ENCODE measurements at regions of chr11 and their contacts with region 1.

Region 1: GRCh38 chr11:85697747-85698146 is 11.8 kb upstream of the CCDC89 start:
- DNase-seq: no peak
- H3K4me3 Mint-ChIP-seq: no peak overlapping the region
- H3K27ac Mint-ChIP-seq: no peak overlapping the region
- H3K4me1 Mint-ChIP-seq: peaks cover 54% of the 10 kb centered on the region
- H3K27me3 Mint-ChIP-seq: no peaks in the 10 kb centered on the region

Region 2: GRCh38 chr11:85483861-85484260 is 213.9 kb before region 1 on chr11:
- CTCF ChIA-PET with region 1: no interaction called
- POLR2A ChIA-PET with region 1: no interaction called
- DNase-seq: no peak
- H3K4me3 Mint-ChIP-seq: no peak overlapping the region
- H3K27ac Mint-ChIP-seq: no peak overlapping the region
- H3K4me1 Mint-ChIP-seq: no peaks in the 10 kb centered on the region
- H3K27me3 Mint-ChIP-seq: no peaks in the 10 kb centered on the region

Region 3: GRCh38 chr11:85854557-85855340 is 157.0 kb after region 1 on chr11:
- CTCF ChIA-PET with region 1: interaction called, 14 read pairs
- POLR2A ChIA-PET with region 1: interaction called, 9 read pairs
- DNase-seq: peak; percentile 88
- H3K4me3 Mint-ChIP-seq: peak overlapping the region; percentile 86
- H3K27ac Mint-ChIP-seq: peak overlapping the region; percentile 93
- H3K4me1 Mint-ChIP-seq: peaks cover 18% of the 10 kb centered on the region
- H3K27me3 Mint-ChIP-seq: peaks cover 3% of the 10 kb centered on the region